Dorsolateral prefrontal cortex (tissue), 120 donors: ENCODE measurements at regions of chr10 and their contacts with region 1.

Region 1: GRCh38 chr10:60456053-60456452 is 66.4 kb upstream of the ANK3 start:
- DNase-seq: no peak
- H3K4me3 ChIP-seq: no peak overlapping the region
- H3K27ac ChIP-seq: no peak overlapping the region
- H3K27me3 ChIP-seq: no peaks in the 10 kb centered on the region
- CTCF ChIP-seq: no peak

Region 2: GRCh38 chr10:60572511-60573194 is 116.6 kb after region 1 on chr10:
- intact Hi-C with region 1: loop called in 1 of 2 experiments (anchors 5 kb)
- DNase-seq: peak in 9 of 10 donors; percentile 41 to 74 (median 58)
- H3K4me3 ChIP-seq: peak overlapping the region; percentile 27 to 87 (median 67)
- H3K27ac ChIP-seq: peak overlapping the region; percentile 32 to 97 (median 86)
- H3K27me3 ChIP-seq: no peaks in the 10 kb centered on the region
- CTCF ChIP-seq: peak in 2 of 56 donors; percentile 7 to 11

Region 3: DNA sequence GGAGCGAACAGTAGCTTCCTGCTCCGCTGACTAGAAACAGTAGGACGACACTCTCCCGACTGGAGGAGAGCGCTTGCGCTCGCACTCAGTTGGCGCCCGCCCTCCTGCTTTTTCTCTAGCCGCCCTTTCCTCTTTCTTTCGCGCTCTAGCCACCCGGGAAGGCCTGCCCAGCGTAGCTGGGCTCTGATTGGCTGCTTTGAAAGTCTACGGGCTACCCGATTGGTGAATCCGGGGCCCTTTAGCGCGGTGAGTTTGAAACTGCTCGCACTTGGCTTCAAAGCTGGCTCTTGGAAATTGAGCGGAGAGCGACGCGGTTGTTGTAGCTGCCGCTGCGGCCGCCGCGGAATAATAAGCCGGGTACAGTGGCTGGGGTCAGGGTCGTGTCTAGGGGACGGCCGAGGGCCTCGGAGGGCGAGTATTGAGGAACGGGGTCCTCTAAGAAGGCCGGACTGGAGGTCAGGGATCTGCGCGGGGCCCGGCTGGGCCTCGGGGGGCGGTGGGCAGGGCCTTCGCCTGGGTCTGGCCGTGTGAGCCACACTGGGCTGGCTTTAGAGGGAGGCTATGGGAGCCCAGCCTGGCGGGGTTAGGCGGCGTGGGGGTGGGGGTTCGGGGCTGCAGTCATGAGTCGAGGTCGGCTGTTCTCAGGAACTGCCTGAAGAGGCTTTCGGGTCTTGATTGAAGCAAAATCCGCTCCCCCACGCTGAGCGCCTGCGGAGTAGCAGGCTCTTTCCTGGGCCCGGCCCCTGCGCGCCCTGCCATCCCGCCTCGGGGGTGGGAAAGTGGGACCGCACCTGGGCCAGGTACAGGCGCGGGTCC is 322.4 kb after region 1 on chr10 and contains the start of gene CDK1:
- intact Hi-C with region 1: loop called in 1 of 2 experiments (anchors 10 kb)
- DNase-seq: peak; percentile 87 to 98 (median 96)
- H3K4me3 ChIP-seq: peak within 1 kb of the TSS; percentile 38 to 83 (median 70)
- H3K27ac ChIP-seq: peak within 1 kb of the TSS in 10 of 59 donors; percentile 5 to 65 (median 40)
- H3K27me3 ChIP-seq: peaks cover 0 to 15% (median 0%) of the 10 kb centered on the region in 45 donors
- CTCF ChIP-seq: peak in 39 of 56 donors; percentile 13 to 63 (median 33)
- total RNA-seq, gene CDK1: 0.25 to 4.0 (median 0.81) TPM in 113 of 120 experiments, not detected in the others